Activated CD4-positive, alpha-beta T cell treated with anti-CD3 and anti-CD28 coated beads, Interleukin-2, amount 10 ng/mL, durations not matched to agents 7 days and 5 days (primary cell): ENCODE measurements at regions of chr22 and their contacts with region 1.

Region 1: DNA sequence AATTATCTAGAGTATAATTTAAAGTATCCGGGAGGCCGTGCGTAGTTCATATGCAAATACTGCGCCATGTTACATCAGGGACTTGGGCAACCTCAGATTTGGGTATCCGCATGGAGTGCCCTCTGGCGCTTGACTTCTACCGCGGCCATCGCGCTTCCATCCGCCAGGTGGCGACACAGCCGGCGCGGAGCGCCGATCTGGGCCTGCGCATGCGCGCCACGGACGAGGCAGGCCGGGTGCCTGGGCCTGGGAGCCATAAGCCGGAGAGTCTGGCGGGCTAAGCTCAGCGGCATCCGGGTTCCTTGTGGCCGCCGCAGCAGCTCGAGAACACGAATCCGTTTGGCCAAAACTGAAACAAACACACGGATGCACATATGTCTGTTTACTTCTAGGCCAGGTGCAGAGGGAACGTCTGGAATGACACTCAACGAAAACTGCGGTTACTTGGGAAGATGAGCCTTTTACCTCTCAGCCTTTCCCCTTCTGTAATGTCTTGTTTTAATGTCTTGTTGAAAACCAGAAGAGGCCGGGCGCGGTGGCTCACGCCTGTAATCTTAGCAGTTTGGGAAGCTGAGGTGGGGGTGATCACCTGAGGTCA is 21.9 kb downstream of the SNU13 start:
- DNase-seq: peak; percentile 93
- H3K4me3 Mint-ChIP-seq: peak overlapping the region; percentile 72
- H3K27ac Mint-ChIP-seq: peak overlapping the region; percentile 92
- H3K4me1 Mint-ChIP-seq: peaks cover 15% of the 10 kb centered on the region
- H3K27me3 Mint-ChIP-seq: no peaks in the 10 kb centered on the region

Region 2: DNA sequence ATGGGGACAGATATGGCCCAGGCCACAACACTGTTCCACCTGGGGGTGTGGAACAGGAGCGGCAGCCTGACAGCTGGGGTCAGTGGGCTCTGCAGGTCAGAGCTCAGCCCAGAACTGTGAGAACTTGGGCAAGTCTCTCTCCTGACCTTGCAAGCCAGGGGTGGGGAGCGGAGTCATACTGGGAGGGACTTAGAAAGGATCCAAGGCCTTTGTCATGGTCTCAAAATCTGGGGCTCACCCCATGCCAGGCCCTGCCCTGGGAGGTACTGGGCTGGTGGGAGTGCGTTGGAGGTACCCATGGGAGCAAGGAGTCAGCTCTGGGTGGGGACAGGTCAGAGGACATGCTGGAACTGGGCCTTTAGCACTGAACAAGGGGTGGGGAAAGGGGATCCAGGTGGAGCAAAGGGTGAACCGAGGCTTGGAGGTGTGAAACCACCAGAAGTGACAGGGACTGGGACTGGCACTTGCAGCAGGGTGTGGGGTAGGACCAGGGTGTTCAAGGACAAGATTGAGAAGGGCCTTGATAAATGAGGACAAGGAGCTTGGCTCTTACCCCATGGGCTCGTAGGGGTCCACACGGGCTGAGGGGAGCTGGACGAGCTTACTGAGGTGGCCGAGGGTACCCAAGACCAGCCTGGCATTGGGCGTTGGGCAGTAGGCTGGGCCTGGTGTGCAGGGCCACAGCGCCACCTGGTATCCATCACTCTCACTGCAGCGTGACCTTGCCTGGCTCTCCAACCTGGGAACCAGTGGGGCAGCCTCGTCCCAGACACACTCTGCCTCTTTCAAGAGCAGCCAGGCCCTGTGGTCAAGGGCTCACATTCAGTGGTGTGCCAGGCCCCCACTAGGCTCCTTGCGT is 69.8 kb before region 1 on chr22:
- CTCF ChIA-PET with region 1: no interaction called
- POLR2A ChIA-PET with region 1: no interaction called
- DNase-seq: peak; percentile 38
- H3K4me3 Mint-ChIP-seq: no peak overlapping the region
- H3K27ac Mint-ChIP-seq: peak overlapping the region; percentile 5
- H3K4me1 Mint-ChIP-seq: peaks cover 6% of the 10 kb centered on the region
- H3K27me3 Mint-ChIP-seq: no peaks in the 10 kb centered on the region

Region 3: GRCh38 chr22:41642331-41643110 is 24.2 kb before region 1 on chr22:
- CTCF ChIA-PET with region 1: interaction called, 12 read pairs
- POLR2A ChIA-PET with region 1: interaction called, 3 read pairs
- DNase-seq: no peak
- H3K4me3 Mint-ChIP-seq: no peak overlapping the region
- H3K27ac Mint-ChIP-seq: peak overlapping the region; percentile 38
- H3K4me1 Mint-ChIP-seq: peaks cover under 1% of the 10 kb centered on the region
- H3K27me3 Mint-ChIP-seq: no peaks in the 10 kb centered on the region

Region 4: DNA sequence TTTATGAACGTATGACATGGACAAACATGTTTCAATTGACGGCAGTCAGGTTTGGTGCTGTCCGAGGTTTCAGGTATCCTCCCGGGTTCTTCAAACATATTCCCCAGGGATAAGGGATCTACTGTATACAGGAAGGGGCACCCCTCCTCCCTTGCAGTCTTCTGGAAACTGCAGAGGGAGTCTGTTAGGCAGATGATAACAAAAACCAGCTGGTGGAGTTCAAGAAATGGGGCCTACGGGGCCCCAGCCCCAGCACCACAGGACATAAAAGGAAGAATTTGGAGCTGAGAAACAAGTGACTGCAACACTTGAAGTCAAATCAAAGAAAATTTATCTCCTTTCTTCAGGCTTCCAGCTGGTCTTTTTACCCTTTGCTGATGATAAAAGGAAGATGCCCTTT is 10.2 kb before region 1 on chr22:
- CTCF ChIA-PET with region 1: interaction called, 18 read pairs
- POLR2A ChIA-PET with region 1: no interaction called
- DNase-seq: no peak
- H3K4me3 Mint-ChIP-seq: no peak overlapping the region
- H3K27ac Mint-ChIP-seq: no peak overlapping the region
- H3K4me1 Mint-ChIP-seq: peaks cover 3% of the 10 kb centered on the region
- H3K27me3 Mint-ChIP-seq: no peaks in the 10 kb centered on the region

Region 5: GRCh38 chr22:41681616-41682015 is 14.9 kb after region 1 on chr22:
- CTCF ChIA-PET with region 1: interaction called, 28 read pairs
- POLR2A ChIA-PET with region 1: no interaction called
- DNase-seq: no peak
- H3K4me3 Mint-ChIP-seq: peak overlapping the region; percentile 90
- H3K27ac Mint-ChIP-seq: peak overlapping the region; percentile 84
- H3K4me1 Mint-ChIP-seq: peaks cover 24% of the 10 kb centered on the region
- H3K27me3 Mint-ChIP-seq: no peaks in the 10 kb centered on the region

Region 6: DNA sequence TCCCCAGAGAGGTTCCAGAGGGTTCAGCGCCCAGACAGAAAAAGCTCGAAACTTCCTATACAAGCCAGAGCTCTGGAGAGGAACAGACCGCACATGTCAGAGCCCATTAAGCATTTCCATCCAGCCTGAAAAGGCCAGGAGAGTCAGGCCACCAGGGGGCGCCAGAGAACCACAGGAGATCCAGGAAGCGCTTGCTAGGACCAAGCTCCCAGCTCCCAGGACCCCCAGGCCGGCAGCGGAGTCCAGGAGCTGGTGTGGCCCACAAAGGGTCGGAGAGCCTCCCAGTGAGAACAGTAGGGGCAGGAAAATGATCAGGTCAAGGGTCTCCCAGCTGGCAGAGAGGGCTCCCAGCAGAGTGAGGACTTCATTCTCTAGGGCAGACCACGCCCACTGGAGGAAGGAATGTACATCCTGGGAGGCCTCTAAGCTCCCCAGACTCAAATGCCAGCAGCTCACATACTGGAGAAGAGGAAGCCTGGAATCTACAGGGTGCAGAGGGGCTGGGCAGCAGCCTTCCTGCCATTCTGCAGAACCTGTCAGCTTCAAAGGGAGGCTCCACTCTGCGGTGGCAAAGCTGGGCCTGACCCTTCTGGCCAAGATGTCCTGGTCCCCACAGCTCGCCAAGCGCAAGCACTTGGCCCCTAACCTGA is 30.5 kb after region 1 on chr22:
- CTCF ChIA-PET with region 1: interaction called, 14 read pairs
- POLR2A ChIA-PET with region 1: no interaction called
- DNase-seq: peak; percentile 93
- H3K4me3 Mint-ChIP-seq: no peak overlapping the region
- H3K27ac Mint-ChIP-seq: peak overlapping the region; percentile 88
- H3K4me1 Mint-ChIP-seq: peaks cover 16% of the 10 kb centered on the region
- H3K27me3 Mint-ChIP-seq: no peaks in the 10 kb centered on the region

Region 7: DNA sequence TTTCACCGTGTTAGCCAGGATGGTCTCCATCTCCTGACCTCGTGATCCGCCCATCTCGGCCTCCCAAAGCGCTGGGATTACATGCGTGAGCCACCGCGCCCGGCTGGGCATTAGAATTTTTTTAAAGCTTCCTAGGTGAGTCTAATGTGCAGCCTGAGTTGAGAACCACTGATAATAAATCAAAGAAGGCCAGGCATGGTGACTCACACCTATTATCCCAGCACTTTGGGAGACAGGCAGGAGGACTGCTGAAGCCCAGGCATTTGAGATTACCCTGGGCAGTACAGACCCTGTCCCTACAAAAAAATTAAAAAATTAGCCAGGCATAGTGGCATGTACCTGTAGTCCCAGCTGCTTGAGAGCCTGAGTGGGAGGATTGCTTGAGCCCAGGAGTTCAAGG is 46.2 kb after region 1 on chr22:
- CTCF ChIA-PET with region 1: no interaction called
- POLR2A ChIA-PET with region 1: no interaction called
- DNase-seq: no peak
- H3K4me3 Mint-ChIP-seq: no peak overlapping the region
- H3K27ac Mint-ChIP-seq: no peak overlapping the region
- H3K4me1 Mint-ChIP-seq: no peaks in the 10 kb centered on the region
- H3K27me3 Mint-ChIP-seq: peaks cover 6% of the 10 kb centered on the region